Activated CD4-positive, alpha-beta T cell treated with anti-CD3 and anti-CD28 coated beads for 36 hours (primary cell): ENCODE measurements at regions of chr6 and their contacts with region 1.

Region 1: GRCh38 chr6:144482142-144482541 is 197.0 kb downstream of the UTRN start:
- DNase-seq: peak; percentile 84
- ATAC-seq: peak; percentile 90
- H3K4me3 Mint-ChIP-seq: no peak overlapping the region
- H3K27ac Mint-ChIP-seq: no peak overlapping the region
- H3K4me1 Mint-ChIP-seq: peaks cover 6% of the 10 kb centered on the region
- H3K27me3 Mint-ChIP-seq: no peaks in the 10 kb centered on the region

Region 2: DNA sequence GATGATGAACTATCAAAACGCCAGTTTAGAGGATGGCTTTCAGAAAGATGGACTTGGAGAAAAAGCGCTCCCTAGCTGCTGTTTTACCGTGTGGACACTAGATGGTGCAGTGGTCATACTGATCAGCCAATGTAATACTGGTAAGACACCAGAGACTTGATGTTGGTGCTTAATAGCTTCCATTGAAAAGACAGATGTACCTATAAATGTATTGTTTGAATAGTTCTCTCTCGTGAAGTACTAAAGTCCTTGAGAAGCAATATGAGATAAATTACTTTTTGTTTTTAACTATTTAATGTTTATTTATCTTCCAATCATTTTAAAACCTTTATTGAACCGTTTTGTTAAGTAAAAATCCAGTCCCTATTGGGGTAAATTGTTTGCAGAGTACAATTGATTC is 906.7 kb before region 1 on chr6:
- CTCF ChIA-PET with region 1: no interaction called
- POLR2A ChIA-PET with region 1: no interaction called
- intact Hi-C with region 1: loop called in 1 of 2 experiments (anchors 5 kb)
- DNase-seq: peak; percentile 58
- ATAC-seq: peak; percentile 93
- H3K4me3 Mint-ChIP-seq: no peak overlapping the region
- H3K27ac Mint-ChIP-seq: no peak overlapping the region
- H3K4me1 Mint-ChIP-seq: no peaks in the 10 kb centered on the region
- H3K27me3 Mint-ChIP-seq: no peaks in the 10 kb centered on the region

Region 3: GRCh38 chr6:144104898-144105487 is 377.1 kb before region 1 on chr6:
- CTCF ChIA-PET with region 1: interaction called, 6 read pairs
- POLR2A ChIA-PET with region 1: interaction called, 3 read pairs
- intact Hi-C with region 1: loop called (anchors 1 kb)
- DNase-seq: peak; percentile 30
- ATAC-seq: peak; percentile 78
- H3K4me3 Mint-ChIP-seq: no peak overlapping the region
- H3K27ac Mint-ChIP-seq: no peak overlapping the region
- H3K4me1 Mint-ChIP-seq: peaks cover 8% of the 10 kb centered on the region
- H3K27me3 Mint-ChIP-seq: no peaks in the 10 kb centered on the region

Region 4: GRCh38 chr6:144264270-144265060 is 217.7 kb before region 1 on chr6:
- CTCF ChIA-PET with region 1: interaction called, 3 read pairs
- POLR2A ChIA-PET with region 1: no interaction called
- intact Hi-C with region 1: loop called (anchors 1 to 5 kb)
- DNase-seq: no peak
- ATAC-seq: no peak
- H3K4me3 Mint-ChIP-seq: no peak overlapping the region
- H3K27ac Mint-ChIP-seq: no peak overlapping the region
- H3K4me1 Mint-ChIP-seq: no peaks in the 10 kb centered on the region
- H3K27me3 Mint-ChIP-seq: no peaks in the 10 kb centered on the region

Region 5: DNA sequence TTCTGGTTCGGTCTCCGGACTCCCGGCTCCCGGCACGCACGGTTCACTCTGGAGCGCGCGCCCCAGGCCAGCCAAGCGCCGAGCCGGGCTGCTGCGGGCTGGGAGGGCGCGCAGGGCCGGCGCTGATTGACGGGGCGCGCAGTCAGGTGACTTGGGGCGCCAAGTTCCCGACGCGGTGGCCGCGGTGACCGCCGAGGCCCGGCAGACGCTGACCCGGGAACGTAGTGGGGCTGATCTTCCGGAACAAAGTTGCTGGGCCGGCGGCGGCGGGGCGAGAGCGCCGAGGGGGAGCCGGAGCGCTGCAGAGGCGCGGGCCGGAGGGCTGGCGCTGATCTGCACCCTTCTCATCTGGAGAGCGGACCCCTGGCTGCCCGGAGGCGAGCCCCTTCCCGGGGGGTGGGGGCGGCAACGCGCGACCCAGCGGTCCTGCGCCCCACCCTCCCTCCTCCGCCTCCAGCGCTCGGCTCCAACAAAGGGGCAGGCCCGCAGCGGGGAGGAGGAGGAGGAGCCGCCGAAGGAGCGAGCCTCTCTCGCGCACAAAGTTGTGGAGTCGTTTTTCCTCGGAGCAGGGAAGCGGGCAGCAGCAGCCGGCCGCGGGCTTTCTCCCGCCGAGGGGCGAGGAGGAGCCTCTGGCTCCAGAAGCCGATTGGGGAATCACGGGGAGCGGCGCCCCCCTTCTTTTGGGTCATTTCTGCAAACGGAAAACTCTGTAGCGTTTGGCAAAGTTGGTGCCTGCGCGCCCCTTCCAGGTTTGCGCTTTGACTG is 197.2 kb before region 1 on chr6 and contains the start of gene UTRN:
- CTCF ChIA-PET with region 1: interaction called, 13 read pairs
- POLR2A ChIA-PET with region 1: no interaction called
- intact Hi-C with region 1: loop called (anchors 1 to 2 kb)
- DNase-seq: peak; percentile 71
- ATAC-seq: peak; percentile 75
- H3K4me3 Mint-ChIP-seq: peak within 1 kb of the TSS; percentile 88
- H3K27ac Mint-ChIP-seq: peak within 1 kb of the TSS; percentile 73
- H3K4me1 Mint-ChIP-seq: peaks cover 16% of the 10 kb centered on the region
- H3K27me3 Mint-ChIP-seq: peaks cover 37% of the 10 kb centered on the region
- total RNA-seq, gene UTRN: 43.4 to 46.2 TPM

Region 6: DNA sequence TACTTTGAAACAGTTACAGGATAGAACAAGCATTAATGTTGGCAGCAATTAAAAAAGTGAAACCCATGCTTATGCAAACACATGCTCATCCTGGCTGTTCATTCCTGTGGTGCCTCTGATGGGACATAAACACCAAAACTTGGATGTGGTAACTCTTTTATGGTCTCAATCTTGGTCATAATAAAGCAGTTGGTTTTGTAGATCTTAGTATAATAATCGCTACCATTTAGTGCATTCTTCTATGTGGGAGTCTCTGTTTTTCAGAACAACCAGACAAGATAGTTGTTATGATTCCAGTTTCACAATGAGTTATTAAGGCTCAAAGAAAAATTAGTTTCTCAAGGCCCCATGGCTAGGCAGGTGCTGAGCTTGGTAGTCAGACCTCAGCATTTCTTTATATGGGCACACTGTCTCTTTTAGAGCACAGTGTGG is 13.0 kb before region 1 on chr6:
- CTCF ChIA-PET with region 1: interaction called, 14 read pairs
- POLR2A ChIA-PET with region 1: no interaction called
- intact Hi-C with region 1: no loop called
- DNase-seq: peak; percentile 41
- ATAC-seq: peak; percentile 89
- H3K4me3 Mint-ChIP-seq: peak overlapping the region; percentile 62
- H3K27ac Mint-ChIP-seq: peak overlapping the region; percentile 92
- H3K4me1 Mint-ChIP-seq: peaks cover 27% of the 10 kb centered on the region
- H3K27me3 Mint-ChIP-seq: no peaks in the 10 kb centered on the region

Region 7: GRCh38 chr6:144493035-144493910 is 11.1 kb after region 1 on chr6:
- CTCF ChIA-PET with region 1: interaction called, 10 read pairs
- POLR2A ChIA-PET with region 1: no interaction called
- intact Hi-C with region 1: no loop called
- DNase-seq: no peak
- ATAC-seq: no peak
- H3K4me3 Mint-ChIP-seq: no peak overlapping the region
- H3K27ac Mint-ChIP-seq: no peak overlapping the region
- H3K4me1 Mint-ChIP-seq: peaks cover 9% of the 10 kb centered on the region
- H3K27me3 Mint-ChIP-seq: no peaks in the 10 kb centered on the region